ENCODE measurements at regions of chr11 and their contacts with region 1.

Region 1: GRCh38 chr11:74388678-74389327 is 9.4 kb downstream of the PGM2L1 start:
- DNase-seq: peak; percentile 68
- H3K4me3 Mint-ChIP-seq: no peak overlapping the region
- H3K27ac Mint-ChIP-seq: peak overlapping the region; percentile 4
- H3K4me1 Mint-ChIP-seq: peaks cover 31% of the 10 kb centered on the region
- H3K27me3 Mint-ChIP-seq: no peaks in the 10 kb centered on the region

Region 2: DNA sequence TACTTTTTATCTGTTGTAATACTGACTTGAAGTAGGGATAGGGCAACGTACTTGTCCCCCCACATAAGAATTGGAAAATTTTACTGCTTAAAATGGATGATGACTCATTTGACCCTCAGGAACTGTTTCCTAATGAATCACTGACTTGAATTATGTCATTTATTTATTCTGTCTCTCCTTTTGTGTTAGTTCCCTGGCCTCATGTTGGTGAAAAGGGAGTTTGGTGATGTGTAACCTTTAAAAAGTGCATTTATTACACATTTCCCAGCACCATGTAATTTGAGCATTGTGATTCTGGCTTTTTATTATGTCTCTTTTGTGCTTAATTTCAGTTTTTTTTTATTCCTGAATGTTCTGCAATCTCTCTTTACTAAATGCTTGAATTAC is 29.7 kb after region 1 on chr11:
- CTCF ChIA-PET with region 1: interaction called, 3 read pairs
- POLR2A ChIA-PET with region 1: no interaction called
- intact Hi-C with region 1: loop called (anchors 2 kb)
- DNase-seq: no peak
- H3K4me3 Mint-ChIP-seq: no peak overlapping the region
- H3K27ac Mint-ChIP-seq: no peak overlapping the region
- H3K4me1 Mint-ChIP-seq: peaks cover 20% of the 10 kb centered on the region
- H3K27me3 Mint-ChIP-seq: no peaks in the 10 kb centered on the region

Region 3: DNA sequence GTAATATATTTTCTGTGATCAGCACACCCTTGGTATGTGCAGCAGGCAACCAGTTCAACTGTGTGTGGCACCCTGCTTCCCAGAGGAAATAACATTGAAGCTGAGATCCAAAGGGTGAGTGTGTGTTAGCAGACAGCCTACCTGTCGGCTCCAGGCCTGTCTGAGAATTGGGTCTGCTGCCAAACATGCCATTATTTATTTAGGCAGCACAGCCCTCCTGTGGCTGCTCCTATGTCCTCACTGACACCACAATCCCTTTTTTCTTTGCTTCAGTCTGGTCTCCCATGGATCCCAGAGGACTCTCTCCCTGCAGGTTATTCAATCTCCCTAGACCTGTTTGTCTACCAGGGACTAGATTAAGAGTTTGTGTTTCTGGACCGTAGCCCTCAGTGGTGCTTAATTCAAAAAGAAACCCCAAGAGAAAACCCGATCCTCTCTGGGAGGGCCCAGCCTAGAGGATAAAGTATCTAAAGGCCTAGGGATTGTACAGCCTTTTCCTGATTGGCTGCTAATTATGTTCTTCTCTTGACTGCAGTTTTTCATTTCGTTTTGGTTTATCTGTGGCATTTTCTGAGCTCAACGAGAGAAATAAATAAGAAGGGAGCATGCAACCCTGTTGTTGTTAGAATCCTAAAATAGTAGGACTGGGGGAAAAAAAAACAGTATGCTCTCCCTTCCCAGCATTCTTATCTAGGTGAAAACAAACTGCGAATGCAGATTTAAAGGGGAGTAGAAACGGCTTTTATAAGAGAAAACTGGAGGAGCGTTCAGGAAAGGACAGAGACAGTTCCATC is 54.5 kb after region 1 on chr11:
- CTCF ChIA-PET with region 1: interaction called, 31 read pairs
- POLR2A ChIA-PET with region 1: no interaction called
- intact Hi-C with region 1: no loop called
- DNase-seq: no peak
- H3K4me3 Mint-ChIP-seq: no peak overlapping the region
- H3K27ac Mint-ChIP-seq: no peak overlapping the region
- H3K4me1 Mint-ChIP-seq: no peaks in the 10 kb centered on the region
- H3K27me3 Mint-ChIP-seq: no peaks in the 10 kb centered on the region

Region 4: DNA sequence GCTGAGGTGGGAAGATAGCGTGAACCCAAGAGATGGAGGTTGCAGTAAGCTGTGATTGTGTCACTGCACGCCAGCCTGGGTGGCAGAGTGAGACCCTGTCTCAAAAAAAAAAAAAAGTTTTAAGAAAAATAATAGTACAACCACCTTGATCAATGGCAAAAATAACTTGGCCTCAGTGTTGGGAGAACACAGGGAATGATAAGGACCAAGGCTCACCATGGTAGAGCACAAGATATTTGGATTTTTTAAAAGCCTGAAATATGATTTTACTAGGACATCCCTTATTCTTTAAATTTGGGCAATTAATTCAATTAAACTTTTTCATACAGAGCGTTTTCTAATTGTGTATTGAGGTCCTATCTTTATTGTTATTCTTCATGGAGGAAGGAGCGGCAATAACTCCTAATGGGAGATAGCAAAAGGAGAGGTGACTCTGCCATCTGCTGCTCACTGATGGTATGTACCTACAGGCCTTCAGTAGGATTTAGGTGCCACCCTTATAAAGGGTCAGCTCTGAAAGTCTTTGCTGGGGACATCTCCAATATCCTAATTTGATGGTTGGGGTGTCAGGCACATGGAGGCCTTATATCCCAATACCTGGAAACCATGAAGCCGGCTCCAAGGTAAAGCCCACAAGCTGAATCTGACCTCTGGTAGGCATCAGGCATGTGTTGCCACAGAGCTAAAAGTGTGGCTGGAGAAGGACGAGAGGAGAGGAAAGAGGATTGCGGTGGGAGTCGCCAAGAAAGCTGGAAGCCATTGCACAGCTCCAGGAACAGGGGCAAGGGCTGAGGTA is 181.7 kb after region 1 on chr11:
- CTCF ChIA-PET with region 1: interaction called, 4 read pairs
- POLR2A ChIA-PET with region 1: no interaction called
- intact Hi-C with region 1: loop called (anchors 2 kb)
- DNase-seq: peak; percentile 46
- H3K4me3 Mint-ChIP-seq: no peak overlapping the region
- H3K27ac Mint-ChIP-seq: no peak overlapping the region
- H3K4me1 Mint-ChIP-seq: no peaks in the 10 kb centered on the region
- H3K27me3 Mint-ChIP-seq: peaks cover 11% of the 10 kb centered on the region